Naive thymus-derived CD4-positive, alpha-beta T cell (primary cell): ENCODE measurements at regions of chr12 and their contacts with region 1.

Region 1: GRCh38 chr12:102883204-102883799 is 33.7 kb downstream of the PAH start:
- DNase-seq: peak in 6 of 9 donors; percentile 10 to 33 (median 18)
- ATAC-seq: peak; percentile 48
- H3K4me3 ChIP-seq: no peak overlapping the region
- H3K4me3 Mint-ChIP-seq: no peak overlapping the region
- H3K27ac ChIP-seq: no peak overlapping the region
- H3K27ac Mint-ChIP-seq: no peak overlapping the region
- H3K4me1 ChIP-seq: no peaks in the 10 kb centered on the region
- H3K4me1 Mint-ChIP-seq: peaks cover 0 to 5% (median 0%) of the 10 kb centered on the region in 7 donors
- H3K27me3 ChIP-seq: no peaks in the 10 kb centered on the region
- H3K27me3 Mint-ChIP-seq: peaks cover 0 to 26% (median 19%) of the 10 kb centered on the region in 5 donors

Region 2: GRCh38 chr12:102948941-102949352 is 65.6 kb after region 1 on chr12:
- CTCF ChIA-PET with region 1: no interaction called
- POLR2A ChIA-PET with region 1: no interaction called
- intact Hi-C with region 1: loop called in 1 of 2 experiments (anchors 2 kb)
- DNase-seq: peak in 5 of 9 donors; percentile 31 to 48 (median 43)
- ATAC-seq: no peak
- H3K4me3 ChIP-seq: no peak overlapping the region
- H3K4me3 Mint-ChIP-seq: no peak overlapping the region
- H3K27ac ChIP-seq: no peak overlapping the region
- H3K27ac Mint-ChIP-seq: no peak overlapping the region
- H3K4me1 ChIP-seq: no peaks in the 10 kb centered on the region
- H3K4me1 Mint-ChIP-seq: peaks cover 0 to 14% (median 4%) of the 10 kb centered on the region in 7 donors
- H3K27me3 ChIP-seq: no peaks in the 10 kb centered on the region
- H3K27me3 Mint-ChIP-seq: peaks cover 60 to 74% (median 61%) of the 10 kb centered on the region in 5 donors